Endothelial cell of umbilical vein (primary cell): ENCODE measurements at regions of chr9 and their contacts with region 1.

Region 1: DNA sequence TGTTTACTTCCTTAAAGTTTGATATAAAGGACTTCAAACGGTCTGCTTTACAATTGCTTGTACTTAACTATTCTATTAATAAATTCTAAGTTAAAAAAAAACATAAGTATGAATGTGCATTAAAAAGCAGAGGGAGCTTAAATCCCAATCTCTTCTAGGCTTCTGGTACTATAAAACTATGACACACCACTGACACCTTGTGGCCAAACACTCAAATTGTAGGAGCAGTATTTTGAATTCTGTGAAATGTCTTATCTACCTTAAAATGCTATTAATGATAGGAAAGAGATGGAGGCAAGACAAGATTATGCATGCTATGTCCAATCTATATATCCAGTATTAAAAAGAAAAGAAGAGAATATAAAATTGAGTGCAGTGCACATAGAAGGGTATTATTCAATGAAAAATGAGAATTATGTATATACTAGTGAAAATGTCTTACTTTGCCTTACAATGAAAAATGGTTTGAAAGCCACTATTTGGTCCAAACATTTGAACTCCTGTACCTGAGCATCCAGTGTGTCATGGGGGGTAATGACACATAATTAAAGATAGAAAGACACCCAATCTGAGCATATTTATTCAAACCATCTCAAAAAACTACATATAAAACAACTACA is 87.6 kb downstream of the ERP44 start:
- DNase-seq: peak; percentile 62
- H3K4me3 ChIP-seq: no peak overlapping the region
- H3K27ac ChIP-seq: no peak overlapping the region
- H3K4me1 ChIP-seq: no peaks in the 10 kb centered on the region
- H3K27me3 ChIP-seq: no peaks in the 10 kb centered on the region
- CTCF ChIP-seq: peak; percentile 37 to 44
- POLR2A ChIP-seq: no peak

Region 2: GRCh38 chr9:99162759-99163364 is 848.3 kb before region 1 on chr9:
- CTCF ChIA-PET with region 1: interaction called, 10 read pairs
- POLR2A ChIA-PET with region 1: no interaction called
- dilution Hi-C with region 1: no loop called
- intact Hi-C with region 1: loop called (anchors 2 kb)
- DNase-seq: peak; percentile 62
- H3K4me3 ChIP-seq: no peak overlapping the region
- H3K27ac ChIP-seq: no peak overlapping the region
- H3K4me1 ChIP-seq: peaks cover 3% of the 10 kb centered on the region
- H3K27me3 ChIP-seq: peaks cover 2 to 7% of the 10 kb centered on the region in 2 experiments
- CTCF ChIP-seq: peak; percentile 43 to 44
- POLR2A ChIP-seq: no peak

Region 3: GRCh38 chr9:99266255-99267023 is 744.7 kb before region 1 on chr9:
- CTCF ChIA-PET with region 1: interaction called, 15 read pairs
- POLR2A ChIA-PET with region 1: no interaction called
- dilution Hi-C with region 1: no loop called
- intact Hi-C with region 1: loop called (anchors 1 kb)
- DNase-seq: peak; percentile 75
- H3K4me3 ChIP-seq: no peak overlapping the region
- H3K27ac ChIP-seq: no peak overlapping the region
- H3K4me1 ChIP-seq: peaks cover 20% of the 10 kb centered on the region
- H3K27me3 ChIP-seq: no peaks in the 10 kb centered on the region
- CTCF ChIP-seq: peak; percentile 89 to 91
- POLR2A ChIP-seq: no peak

Region 4: GRCh38 chr9:99807276-99807852 is 203.8 kb before region 1 on chr9:
- CTCF ChIA-PET with region 1: interaction called, 7 read pairs
- POLR2A ChIA-PET with region 1: no interaction called
- dilution Hi-C with region 1: no loop called
- intact Hi-C with region 1: loop called (anchors 1 kb)
- DNase-seq: peak; percentile 61
- H3K4me3 ChIP-seq: no peak overlapping the region
- H3K27ac ChIP-seq: no peak overlapping the region
- H3K4me1 ChIP-seq: no peaks in the 10 kb centered on the region
- H3K27me3 ChIP-seq: no peaks in the 10 kb centered on the region
- CTCF ChIP-seq: peak; percentile 70 to 72
- POLR2A ChIP-seq: no peak

Region 5: DNA sequence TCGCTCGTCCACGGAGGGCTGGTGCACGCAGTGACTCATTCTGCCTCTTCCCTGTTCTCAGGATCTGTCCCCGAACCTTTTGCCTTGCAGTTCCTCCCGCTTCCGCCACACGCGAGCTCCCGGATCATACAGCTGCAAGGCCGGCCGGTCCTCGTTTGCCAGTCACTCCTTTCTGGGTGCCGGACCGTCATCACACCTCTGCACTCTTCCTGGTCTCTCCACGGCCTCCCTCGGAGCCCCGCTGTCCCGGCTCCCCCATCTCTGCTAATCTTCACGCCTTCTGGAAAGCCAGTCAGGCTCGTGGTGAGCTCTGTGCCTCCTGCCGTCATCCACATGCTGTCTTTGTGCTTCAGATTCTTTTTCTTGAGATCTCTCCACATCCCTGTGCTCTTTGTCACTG is 12.9 kb before region 1 on chr9:
- CTCF ChIA-PET with region 1: interaction called, 11 read pairs
- POLR2A ChIA-PET with region 1: no interaction called
- dilution Hi-C with region 1: no loop called
- intact Hi-C with region 1: no loop called
- DNase-seq: no peak
- H3K4me3 ChIP-seq: no peak overlapping the region
- H3K27ac ChIP-seq: no peak overlapping the region
- H3K4me1 ChIP-seq: no peaks in the 10 kb centered on the region
- H3K27me3 ChIP-seq: no peaks in the 10 kb centered on the region
- CTCF ChIP-seq: no peak
- POLR2A ChIP-seq: no peak

Region 6: GRCh38 chr9:100486479-100487176 is 475.5 kb after region 1 on chr9:
- CTCF ChIA-PET with region 1: no interaction called
- POLR2A ChIA-PET with region 1: no interaction called
- dilution Hi-C with region 1: no loop called
- intact Hi-C with region 1: no loop called
- DNase-seq: no peak
- H3K4me3 ChIP-seq: no peak overlapping the region
- H3K27ac ChIP-seq: no peak overlapping the region
- H3K4me1 ChIP-seq: no peaks in the 10 kb centered on the region
- H3K27me3 ChIP-seq: no peaks in the 10 kb centered on the region
- CTCF ChIP-seq: no peak
- POLR2A ChIP-seq: no peak